Activated CD4-positive, alpha-beta T cell treated with anti-CD3 and anti-CD28 coated beads, Interleukin-2, amount 10 ng/mL, durations not matched to agents 24 days and 14 days (primary cell): ENCODE measurements at regions of chrX and their contacts with region 1.

Region 1: DNA sequence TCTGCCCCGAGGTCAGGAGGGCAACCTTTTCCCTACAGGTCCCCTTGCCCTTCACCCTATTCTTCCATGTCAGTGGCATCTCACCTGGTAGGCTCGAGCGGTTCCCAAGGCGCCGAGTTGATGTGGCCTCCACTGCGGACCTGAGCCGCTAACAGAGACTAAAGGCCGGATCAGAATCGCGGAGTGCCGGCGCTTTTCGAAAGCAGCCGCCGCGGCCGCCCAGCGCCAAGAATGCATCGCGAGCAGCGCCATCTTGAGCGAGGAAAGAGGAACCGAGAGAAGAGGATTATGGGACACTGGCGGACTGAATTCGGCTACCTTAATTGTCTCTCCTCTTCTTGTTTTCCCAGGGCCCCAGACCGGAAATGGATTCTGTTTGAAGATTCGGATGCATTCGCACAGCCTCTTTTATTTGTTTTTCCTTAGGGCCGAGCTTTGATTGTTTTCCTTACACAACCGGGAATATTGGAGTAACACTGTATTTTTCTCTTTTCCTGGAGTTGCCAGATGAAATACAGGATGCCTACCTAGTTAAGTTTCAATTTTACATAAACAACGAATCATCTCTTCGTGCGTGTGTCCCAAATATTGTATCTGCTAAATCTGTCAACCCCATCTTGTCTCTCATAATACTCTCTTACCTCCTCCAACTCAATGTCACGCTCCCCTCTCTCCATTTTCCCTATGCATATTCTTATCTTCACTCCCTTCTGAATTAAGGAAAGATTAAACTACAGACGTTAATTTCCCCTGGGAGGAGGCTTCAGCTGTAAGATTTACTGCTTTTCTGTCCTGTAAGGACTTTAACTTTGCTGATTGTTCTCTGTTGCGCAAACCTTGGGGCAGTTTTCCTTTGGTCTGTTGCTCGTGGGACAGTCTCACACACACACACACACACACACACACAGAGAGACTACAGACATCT is at the start of gene ABCB7:
- DNase-seq: peak; percentile 89
- H3K4me3 Mint-ChIP-seq: peak within 1 kb of the TSS; percentile 90
- H3K27ac Mint-ChIP-seq: peak within 1 kb of the TSS; percentile 93
- H3K4me1 Mint-ChIP-seq: peaks cover 28% of the 10 kb centered on the region
- H3K27me3 Mint-ChIP-seq: no peaks in the 10 kb centered on the region
- total RNA-seq, gene ABCB7: 37.4 and 45.7 TPM in 2 replicates

Region 2: GRCh38 chrX:74924449-74925225 is 231.6 kb before region 1 on chrX:
- intact Hi-C with region 1: loop called (anchors 10 kb)
- DNase-seq: peak; percentile 77
- H3K4me3 Mint-ChIP-seq: peak overlapping the region; percentile 87
- H3K27ac Mint-ChIP-seq: peak overlapping the region; percentile 89
- H3K4me1 Mint-ChIP-seq: peaks cover 5% of the 10 kb centered on the region
- H3K27me3 Mint-ChIP-seq: peaks cover 21% of the 10 kb centered on the region

Region 3: GRCh38 chrX:75061701-75062100 is 94.6 kb before region 1 on chrX:
- intact Hi-C with region 1: loop called (anchors 5 kb)
- DNase-seq: no peak
- H3K4me3 Mint-ChIP-seq: no peak overlapping the region
- H3K27ac Mint-ChIP-seq: peak overlapping the region; percentile 70
- H3K4me1 Mint-ChIP-seq: peaks cover 2% of the 10 kb centered on the region
- H3K27me3 Mint-ChIP-seq: no peaks in the 10 kb centered on the region

Region 4: DNA sequence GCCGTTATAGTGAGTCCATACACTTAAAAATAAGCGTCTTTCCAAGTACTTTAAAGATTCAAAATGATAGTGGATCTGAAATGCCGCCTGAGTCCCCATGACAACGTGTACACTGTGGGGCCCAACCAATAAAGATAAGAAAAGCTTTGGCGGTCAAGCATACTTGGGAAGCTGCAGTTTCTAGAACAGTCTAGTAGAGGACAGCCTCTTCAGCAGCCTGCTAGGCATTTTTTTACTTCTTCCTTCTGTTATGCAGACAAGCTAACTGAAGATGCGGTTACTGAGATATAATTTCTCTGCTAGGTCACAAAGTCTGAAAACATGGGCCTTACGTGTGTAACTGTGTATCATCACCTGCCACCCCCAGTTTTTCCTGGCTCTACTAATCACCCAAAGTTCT is 117.2 kb after region 1 on chrX:
- intact Hi-C with region 1: loop called (anchors 2 kb)
- DNase-seq: no peak
- H3K4me3 Mint-ChIP-seq: peak overlapping the region; percentile 96
- H3K27ac Mint-ChIP-seq: peak overlapping the region; percentile 91
- H3K4me1 Mint-ChIP-seq: peaks cover 26% of the 10 kb centered on the region
- H3K27me3 Mint-ChIP-seq: no peaks in the 10 kb centered on the region

Region 5: GRCh38 chrX:76195579-76195978 is 1039.3 kb after region 1 on chrX:
- intact Hi-C with region 1: no loop called
- DNase-seq: no peak
- H3K4me3 Mint-ChIP-seq: no peak overlapping the region
- H3K27ac Mint-ChIP-seq: no peak overlapping the region
- H3K4me1 Mint-ChIP-seq: no peaks in the 10 kb centered on the region
- H3K27me3 Mint-ChIP-seq: no peaks in the 10 kb centered on the region